HepG2 (cell line): ENCODE measurements at regions of chr13 and their contacts with region 1.

Region 1: DNA sequence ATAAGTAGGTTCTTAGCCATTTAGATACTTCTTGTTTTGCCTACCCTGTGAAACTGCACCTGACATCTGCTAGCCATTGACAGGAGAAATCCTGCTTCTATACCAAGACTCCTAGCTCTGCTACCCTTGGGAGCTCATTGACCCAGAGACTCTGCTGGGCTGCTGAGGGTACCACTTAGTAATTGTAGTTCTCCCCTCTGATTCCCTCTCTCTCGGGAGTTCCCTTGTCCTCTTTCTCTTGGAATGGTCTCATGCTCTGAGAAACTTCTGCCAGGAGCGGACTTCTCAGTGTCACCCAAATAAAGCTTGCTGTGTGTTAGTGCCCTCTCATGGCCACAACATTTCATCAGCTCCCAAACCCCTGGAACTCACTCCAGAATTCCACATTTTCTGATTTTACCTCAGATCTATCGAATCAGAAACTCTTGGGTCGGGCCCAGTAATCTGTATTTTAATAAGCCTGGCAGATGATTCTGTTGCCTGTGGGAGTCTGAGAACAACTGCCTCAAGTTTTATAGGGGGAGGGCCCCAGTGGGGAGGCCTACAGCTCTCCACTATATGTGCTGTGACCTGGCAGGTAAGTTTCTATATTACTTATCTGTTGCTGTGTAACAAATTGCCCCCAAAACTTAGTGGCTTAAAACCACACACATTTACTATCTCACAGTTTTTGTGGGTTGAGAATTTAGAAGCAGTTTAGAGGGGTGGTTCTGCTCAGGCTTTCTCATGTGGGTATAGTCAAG is 221.1 kb downstream of the TDRD3 start:
- DNase-seq: peak; percentile 32
- ATAC-seq: peak; percentile 98
- H3K4me3 ChIP-seq: peak overlapping the region in 1 of 3 experiments; percentile 11; a peak in 1 of 6 replicates
- H3K27ac ChIP-seq: no peak overlapping the region
- H3K4me1 ChIP-seq: no peaks in the 10 kb centered on the region
- H3K27me3 ChIP-seq: no peaks in the 10 kb centered on the region; a peak in 1 of 5 replicates
- CTCF ChIP-seq: peak; percentile 74
- EP300 ChIP-seq: no peak
- POLR2A ChIP-seq: no peak
- RAD21 ChIP-seq: peak; percentile 39; the same call in 1 of the 2 replicates

Region 2: DNA sequence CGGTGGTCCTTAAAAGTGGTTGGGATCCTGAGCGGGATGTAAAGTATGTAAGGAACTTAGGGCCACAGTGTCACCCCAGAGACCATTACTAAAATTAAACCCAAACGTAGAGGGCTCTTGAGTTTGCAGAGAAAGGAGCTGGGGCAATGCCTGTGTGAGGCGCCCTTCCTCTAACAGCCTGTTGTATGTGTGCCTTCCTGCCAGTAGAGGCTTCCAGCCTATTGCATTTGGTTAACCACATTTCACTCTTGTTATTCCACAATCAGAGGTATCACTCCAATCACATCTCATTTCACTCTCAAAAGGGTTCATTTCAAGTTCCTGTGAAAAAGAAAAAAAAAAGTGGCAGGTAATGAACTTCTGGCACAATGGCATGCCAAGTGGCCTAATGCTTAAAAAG is 483.8 kb before region 1 on chr13:
- CTCF ChIA-PET with region 1: no interaction called
- POLR2A ChIA-PET with region 1: no interaction called
- in situ Hi-C with region 1: no loop called
- intact Hi-C with region 1: no loop called
- DNase-seq: no peak
- ATAC-seq: no peak
- H3K4me3 ChIP-seq: no peak overlapping the region
- H3K27ac ChIP-seq: no peak overlapping the region
- H3K4me1 ChIP-seq: no peaks in the 10 kb centered on the region
- H3K27me3 ChIP-seq: no peaks in the 10 kb centered on the region
- CTCF ChIP-seq: no peak
- EP300 ChIP-seq: no peak
- POLR2A ChIP-seq: no peak
- RAD21 ChIP-seq: no peak

Region 3: DNA sequence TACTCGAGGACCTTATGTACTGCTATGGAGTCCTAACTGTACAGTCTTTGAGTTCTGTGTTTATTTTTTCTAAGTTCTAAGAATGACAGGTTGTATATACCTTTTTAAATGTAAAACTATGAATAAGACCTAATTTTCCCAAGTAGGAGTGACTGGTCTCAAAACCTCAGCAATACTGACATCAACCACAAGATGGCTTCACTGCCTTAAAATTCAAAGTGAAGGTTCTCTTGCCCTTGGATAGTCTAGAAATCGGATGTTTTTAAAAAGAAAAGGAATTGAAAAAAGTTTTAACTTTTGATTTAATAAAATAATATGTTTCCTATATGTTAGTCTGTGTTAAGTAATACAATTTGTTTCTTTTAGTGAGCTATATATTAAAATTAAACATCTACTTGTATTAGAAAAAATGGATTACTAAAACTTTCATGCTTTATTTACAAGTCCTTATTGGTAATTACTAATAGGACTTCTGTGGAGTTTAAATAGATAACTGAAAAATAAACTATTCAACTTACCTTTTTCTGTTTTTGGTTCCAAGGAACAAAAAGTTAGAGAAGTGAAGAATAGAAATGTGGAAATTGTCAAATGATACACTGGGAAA is 169.2 kb before region 1 on chr13:
- CTCF ChIA-PET with region 1: interaction called, 3 read pairs
- POLR2A ChIA-PET with region 1: no interaction called
- in situ Hi-C with region 1: no loop called
- intact Hi-C with region 1: loop called (anchors 1 kb)
- DNase-seq: peak; percentile 31
- ATAC-seq: peak; percentile 64
- H3K4me3 ChIP-seq: no peak overlapping the region
- H3K27ac ChIP-seq: no peak overlapping the region
- H3K4me1 ChIP-seq: no peaks in the 10 kb centered on the region
- H3K27me3 ChIP-seq: no peaks in the 10 kb centered on the region
- CTCF ChIP-seq: peak; percentile 49
- EP300 ChIP-seq: no peak
- POLR2A ChIP-seq: no peak
- RAD21 ChIP-seq: no peak

Region 4: GRCh38 chr13:60467098-60467497 is 151.1 kb before region 1 on chr13:
- CTCF ChIA-PET with region 1: no interaction called
- POLR2A ChIA-PET with region 1: interaction called, 3 read pairs
- in situ Hi-C with region 1: loop called (anchors 5 kb)
- intact Hi-C with region 1: no loop called
- DNase-seq: no peak
- ATAC-seq: no peak
- H3K4me3 ChIP-seq: no peak overlapping the region
- H3K27ac ChIP-seq: no peak overlapping the region
- H3K4me1 ChIP-seq: no peaks in the 10 kb centered on the region
- H3K27me3 ChIP-seq: no peaks in the 10 kb centered on the region
- CTCF ChIP-seq: no peak
- EP300 ChIP-seq: no peak
- POLR2A ChIP-seq: no peak
- RAD21 ChIP-seq: no peak

Region 5: GRCh38 chr13:60479273-60479672 is 138.9 kb before region 1 on chr13:
- CTCF ChIA-PET with region 1: interaction called, 116 read pairs
- POLR2A ChIA-PET with region 1: no interaction called
- in situ Hi-C with region 1: loop called (anchors 5 kb)
- intact Hi-C with region 1: no loop called
- DNase-seq: no peak
- ATAC-seq: no peak
- H3K4me3 ChIP-seq: no peak overlapping the region
- H3K27ac ChIP-seq: no peak overlapping the region
- H3K4me1 ChIP-seq: no peaks in the 10 kb centered on the region
- H3K27me3 ChIP-seq: no peaks in the 10 kb centered on the region
- CTCF ChIP-seq: no peak
- EP300 ChIP-seq: no peak
- POLR2A ChIP-seq: no peak
- RAD21 ChIP-seq: no peak